PC-9 (cell line): ENCODE measurements at regions of chr11 and their contacts with region 1.

Region 1: DNA sequence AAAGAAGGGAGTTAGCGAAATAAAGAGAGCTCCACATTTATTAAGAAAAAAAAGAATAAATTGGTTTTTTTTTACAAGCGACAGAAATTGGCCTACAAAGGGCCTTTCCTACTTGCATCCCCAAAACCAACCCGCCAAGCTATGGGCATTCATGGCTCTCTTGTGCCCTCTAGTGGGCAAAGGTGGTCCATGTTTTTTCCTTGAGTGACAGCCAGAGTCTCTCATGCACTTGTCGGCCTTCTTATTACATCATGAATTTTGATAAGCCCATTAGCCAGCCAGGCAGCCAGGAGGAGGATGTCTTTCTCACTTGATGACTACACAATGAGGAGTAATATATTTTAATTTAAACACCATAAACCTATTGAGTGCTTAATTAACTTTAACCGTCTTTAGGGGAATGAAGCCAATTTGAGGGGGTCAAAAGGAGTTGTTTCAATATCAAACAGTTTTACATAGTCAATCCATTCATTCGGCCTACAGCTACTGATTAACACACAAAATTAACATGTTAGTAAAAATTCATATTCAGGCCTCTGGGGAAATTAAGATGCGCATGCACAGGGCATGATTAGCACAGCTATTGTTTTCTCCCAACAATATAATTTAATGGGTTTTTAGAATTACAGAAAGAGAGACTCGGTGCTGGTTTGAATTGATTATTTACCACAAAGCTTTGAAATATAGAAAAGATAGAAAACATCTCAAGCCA is 85.5 kb downstream of the RCN1 start:
- DNase-seq: peak; percentile 79 to 81
- H3K4me3 ChIP-seq: no peak overlapping the region
- H3K27ac ChIP-seq: no peak overlapping the region
- H3K4me1 ChIP-seq: no peaks in the 10 kb centered on the region
- H3K27me3 ChIP-seq: peaks cover under 1% of the 10 kb centered on the region; the same call in 1 of the 2 replicates
- CTCF ChIP-seq: peak; percentile 97

Region 2: GRCh38 chr11:30960387-30960992 is 1215.9 kb before region 1 on chr11:
- CTCF ChIA-PET with region 1: no interaction called
- POLR2A ChIA-PET with region 1: no interaction called
- intact Hi-C with region 1: loop called (anchors 5 kb)
- DNase-seq: no peak
- H3K4me3 ChIP-seq: no peak overlapping the region
- H3K27ac ChIP-seq: no peak overlapping the region
- H3K4me1 ChIP-seq: no peaks in the 10 kb centered on the region
- H3K27me3 ChIP-seq: no peaks in the 10 kb centered on the region
- CTCF ChIP-seq: peak; percentile 66

Region 3: DNA sequence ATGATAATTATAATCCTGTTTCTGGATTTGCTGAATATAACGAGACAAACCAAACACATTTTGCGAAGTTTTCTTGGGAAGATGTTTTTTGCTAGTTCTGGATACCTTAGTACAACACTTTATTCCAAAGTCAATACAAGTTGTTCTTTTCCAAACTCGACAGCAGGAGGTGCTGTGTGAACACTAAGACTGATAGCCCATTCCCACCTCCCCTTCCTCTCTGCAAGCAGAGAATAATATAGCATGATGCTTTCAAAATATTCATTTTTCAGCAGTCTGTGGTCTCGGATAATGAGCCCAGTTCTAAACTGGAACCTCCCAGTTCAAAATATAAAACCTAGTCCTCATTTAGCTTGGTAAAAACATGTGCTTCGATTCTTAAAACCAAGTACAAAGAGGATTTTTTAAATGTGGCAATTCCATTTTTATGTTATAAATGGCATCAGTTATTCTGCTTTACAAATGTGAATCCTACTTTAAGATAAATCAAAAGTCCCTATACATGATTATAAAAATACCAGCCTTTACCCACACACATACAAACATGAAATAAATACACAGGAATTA is 936.0 kb before region 1 on chr11:
- CTCF ChIA-PET with region 1: no interaction called
- POLR2A ChIA-PET with region 1: no interaction called
- intact Hi-C with region 1: loop called (anchors 1 kb)
- DNase-seq: peak; percentile 18 to 46
- H3K4me3 ChIP-seq: no peak overlapping the region
- H3K27ac ChIP-seq: no peak overlapping the region
- H3K4me1 ChIP-seq: no peaks in the 10 kb centered on the region
- H3K27me3 ChIP-seq: no peaks in the 10 kb centered on the region
- CTCF ChIP-seq: peak; percentile 84

Region 4: GRCh38 chr11:31487848-31488247 is 688.5 kb before region 1 on chr11:
- CTCF ChIA-PET with region 1: no interaction called
- POLR2A ChIA-PET with region 1: no interaction called
- intact Hi-C with region 1: loop called (anchors 5 kb)
- DNase-seq: peak in 1 of 2 experiments; percentile 49
- H3K4me3 ChIP-seq: no peak overlapping the region
- H3K27ac ChIP-seq: no peak overlapping the region
- H3K4me1 ChIP-seq: no peaks in the 10 kb centered on the region
- H3K27me3 ChIP-seq: no peaks in the 10 kb centered on the region
- CTCF ChIP-seq: peak; percentile 70

Region 5: DNA sequence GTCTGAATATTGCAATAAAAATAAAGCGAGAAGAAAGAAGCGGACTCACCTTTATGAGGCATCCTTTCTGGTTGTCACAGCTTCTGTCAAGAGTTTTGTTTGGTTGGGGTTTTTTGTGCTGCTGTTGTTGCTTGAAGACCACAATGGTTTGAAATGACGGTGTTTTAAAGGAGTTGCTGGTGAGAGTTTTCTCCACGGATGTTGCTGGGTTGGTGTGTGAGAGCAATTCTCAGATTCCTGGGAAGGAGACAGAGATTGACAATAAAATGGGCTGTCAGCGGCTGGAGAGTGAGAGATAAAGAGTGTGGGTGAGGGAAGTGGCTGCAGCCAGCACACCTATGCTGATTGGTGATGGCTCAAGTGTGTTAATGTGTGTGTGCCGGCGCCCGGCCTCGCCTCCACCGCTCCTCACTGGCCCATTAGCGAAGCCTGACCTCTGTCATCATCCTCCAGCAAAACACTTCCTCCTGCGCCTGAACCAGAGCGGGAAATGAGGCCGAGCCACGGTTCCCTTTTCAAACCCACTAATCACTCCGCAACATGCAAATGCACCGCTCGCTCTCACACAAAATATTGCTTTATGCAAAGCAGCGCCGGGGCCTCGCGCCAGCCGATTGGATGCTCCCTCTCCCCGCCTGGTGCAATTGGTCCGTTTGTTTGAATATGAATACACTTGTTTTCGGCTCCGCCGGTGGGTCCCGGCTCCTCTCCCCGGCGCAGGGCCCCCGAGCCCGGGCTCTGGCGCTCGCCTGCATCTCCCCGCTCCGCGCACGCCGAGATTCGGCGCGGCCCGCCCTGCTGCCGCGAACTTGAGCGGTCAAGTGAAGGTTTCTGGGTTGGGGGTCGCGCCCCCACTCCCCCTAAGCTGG is 365.4 kb before region 1 on chr11 and contains the start of gene PAX6:
- CTCF ChIA-PET with region 1: no interaction called
- POLR2A ChIA-PET with region 1: no interaction called
- intact Hi-C with region 1: loop called (anchors 10 kb)
- DNase-seq: peak; percentile 95 to 98
- H3K4me3 ChIP-seq: peak within 1 kb of the TSS; percentile 89
- H3K27ac ChIP-seq: peak within 1 kb of the TSS; percentile 77
- H3K4me1 ChIP-seq: peaks cover 28% of the 10 kb centered on the region
- H3K27me3 ChIP-seq: no peaks in the 10 kb centered on the region
- CTCF ChIP-seq: 0 out of 2 replicates have a peak, but pooled peaks have one; percentile 16
- total RNA-seq, gene PAX6: 19.8 and 29.0 TPM in 2 replicates

Region 6: GRCh38 chr11:32052218-32052617 is 124.2 kb before region 1 on chr11:
- CTCF ChIA-PET with region 1: interaction called, 7 read pairs
- POLR2A ChIA-PET with region 1: no interaction called
- intact Hi-C with region 1: loop called (anchors 1 kb)
- DNase-seq: peak in 1 of 2 experiments; percentile 54
- H3K4me3 ChIP-seq: no peak overlapping the region
- H3K27ac ChIP-seq: no peak overlapping the region
- H3K4me1 ChIP-seq: no peaks in the 10 kb centered on the region
- H3K27me3 ChIP-seq: peaks cover 3% of the 10 kb centered on the region; the same call in 1 of the 2 replicates
- CTCF ChIP-seq: peak; percentile 91